Endothelial cell of umbilical vein (primary cell): ENCODE measurements at regions of chr6 and their contacts with region 1.

Region 1: DNA sequence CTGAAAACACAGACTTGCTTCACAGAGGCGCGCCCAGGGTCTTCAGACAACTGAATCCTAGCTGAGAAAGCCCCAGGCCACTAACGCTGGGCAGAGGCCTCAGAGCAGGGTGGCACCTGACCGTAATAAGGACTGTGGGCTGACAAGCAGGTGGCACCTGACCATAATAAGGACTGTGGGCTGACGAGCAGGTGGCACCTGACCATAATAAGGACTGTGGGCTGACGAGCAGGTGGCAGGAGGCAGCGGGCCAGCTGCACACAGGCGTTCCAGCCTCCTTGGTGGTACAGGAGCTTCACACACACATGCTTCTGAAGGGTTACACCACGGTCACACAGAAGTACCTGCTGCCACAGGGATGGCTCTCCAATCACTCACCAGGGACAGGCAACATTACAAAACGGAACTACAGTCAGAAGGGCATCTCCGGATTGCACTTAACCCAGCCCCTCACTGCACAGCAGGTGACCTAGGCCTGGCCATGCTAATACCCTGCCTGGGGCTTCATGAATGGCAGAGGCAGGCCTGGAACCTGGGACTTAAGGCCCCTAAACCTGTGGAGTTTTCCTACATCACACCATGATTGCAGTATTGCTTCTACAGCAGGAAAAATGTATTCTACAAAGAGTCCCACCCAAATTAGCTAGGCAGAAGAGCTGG is 50.8 kb downstream of the PSMG4 start:
- DNase-seq: no peak
- H3K4me3 ChIP-seq: no peak overlapping the region
- H3K27ac ChIP-seq: no peak overlapping the region
- H3K4me1 ChIP-seq: no peaks in the 10 kb centered on the region
- H3K27me3 ChIP-seq: no peaks in the 10 kb centered on the region
- CTCF ChIP-seq: no peak
- POLR2A ChIP-seq: no peak

Region 2: GRCh38 chr6:3287936-3288707 is 21.4 kb before region 1 on chr6:
- CTCF ChIA-PET with region 1: interaction called, 4 read pairs
- POLR2A ChIA-PET with region 1: no interaction called
- dilution Hi-C with region 1: no loop called
- intact Hi-C with region 1: loop called (anchors 1 kb)
- DNase-seq: no peak
- H3K4me3 ChIP-seq: no peak overlapping the region
- H3K27ac ChIP-seq: no peak overlapping the region
- H3K4me1 ChIP-seq: peaks cover 6% of the 10 kb centered on the region
- H3K27me3 ChIP-seq: no peaks in the 10 kb centered on the region
- CTCF ChIP-seq: no peak
- POLR2A ChIP-seq: no peak